CD4-positive, alpha-beta T cell (primary cell): ENCODE measurements at regions of chr17 and their contacts with region 1.

Region 1: GRCh38 chr17:39235555-39236449 is 10.1 kb upstream of the STAC2 start:
- DNase-seq: peak in 9 of 14 experiments; percentile 23 to 80 (median 47)
- ATAC-seq: peak; percentile 45
- H3K4me3 ChIP-seq: no peak overlapping the region
- H3K4me3 Mint-ChIP-seq: no peak overlapping the region
- H3K27ac ChIP-seq: no peak overlapping the region
- H3K27ac Mint-ChIP-seq: peak overlapping the region; percentile 31
- H3K4me1 ChIP-seq: peaks cover 56% of the 10 kb centered on the region
- H3K4me1 Mint-ChIP-seq: peaks cover 44% of the 10 kb centered on the region
- H3K27me3 ChIP-seq: peaks cover 0 to 4% of the 10 kb centered on the region in 2 experiments
- H3K27me3 Mint-ChIP-seq: peaks cover 14% of the 10 kb centered on the region
- CTCF ChIP-seq: peak; percentile 63

Region 2: GRCh38 chr17:39077866-39078265 is 157.9 kb before region 1 on chr17:
- CTCF ChIA-PET with region 1: no interaction called
- POLR2A ChIA-PET with region 1: no interaction called
- intact Hi-C with region 1: loop called in 1 of 2 experiments (anchors 10 kb)
- DNase-seq: no peak
- ATAC-seq: no peak
- H3K4me3 ChIP-seq: no peak overlapping the region
- H3K4me3 Mint-ChIP-seq: no peak overlapping the region
- H3K27ac ChIP-seq: no peak overlapping the region
- H3K27ac Mint-ChIP-seq: no peak overlapping the region
- H3K4me1 ChIP-seq: no peaks in the 10 kb centered on the region
- H3K4me1 Mint-ChIP-seq: no peaks in the 10 kb centered on the region
- H3K27me3 ChIP-seq: no peaks in the 10 kb centered on the region
- H3K27me3 Mint-ChIP-seq: no peaks in the 10 kb centered on the region
- CTCF ChIP-seq: no peak

Region 3: GRCh38 chr17:39164675-39165143 is 71.1 kb before region 1 on chr17:
- CTCF ChIA-PET with region 1: interaction called, 12 read pairs
- POLR2A ChIA-PET with region 1: no interaction called
- intact Hi-C with region 1: no loop called
- DNase-seq: peak; percentile 56 to 85 (median 63)
- ATAC-seq: peak; percentile 86
- H3K4me3 ChIP-seq: peak overlapping the region; percentile 60
- H3K4me3 Mint-ChIP-seq: peak overlapping the region; percentile 90
- H3K27ac ChIP-seq: no peak overlapping the region
- H3K27ac Mint-ChIP-seq: no peak overlapping the region
- H3K4me1 ChIP-seq: peaks cover 32% of the 10 kb centered on the region
- H3K4me1 Mint-ChIP-seq: peaks cover 27% of the 10 kb centered on the region
- H3K27me3 ChIP-seq: peaks cover 17 to 22% of the 10 kb centered on the region in 2 experiments
- H3K27me3 Mint-ChIP-seq: peaks cover 34% of the 10 kb centered on the region
- CTCF ChIP-seq: peak; percentile 94

Region 4: GRCh38 chr17:39174907-39175694 is 60.7 kb before region 1 on chr17:
- CTCF ChIA-PET with region 1: interaction called, 10 read pairs
- POLR2A ChIA-PET with region 1: interaction called, 5 read pairs
- intact Hi-C with region 1: no loop called
- DNase-seq: peak; percentile 67 to 91 (median 74)
- ATAC-seq: peak; percentile 95
- H3K4me3 ChIP-seq: no peak overlapping the region
- H3K4me3 Mint-ChIP-seq: no peak overlapping the region
- H3K27ac ChIP-seq: no peak overlapping the region
- H3K27ac Mint-ChIP-seq: no peak overlapping the region
- H3K4me1 ChIP-seq: peaks cover 22% of the 10 kb centered on the region
- H3K4me1 Mint-ChIP-seq: peaks cover 22% of the 10 kb centered on the region
- H3K27me3 ChIP-seq: no peaks in the 10 kb centered on the region
- H3K27me3 Mint-ChIP-seq: no peaks in the 10 kb centered on the region
- CTCF ChIP-seq: peak; percentile 82

Region 5: DNA sequence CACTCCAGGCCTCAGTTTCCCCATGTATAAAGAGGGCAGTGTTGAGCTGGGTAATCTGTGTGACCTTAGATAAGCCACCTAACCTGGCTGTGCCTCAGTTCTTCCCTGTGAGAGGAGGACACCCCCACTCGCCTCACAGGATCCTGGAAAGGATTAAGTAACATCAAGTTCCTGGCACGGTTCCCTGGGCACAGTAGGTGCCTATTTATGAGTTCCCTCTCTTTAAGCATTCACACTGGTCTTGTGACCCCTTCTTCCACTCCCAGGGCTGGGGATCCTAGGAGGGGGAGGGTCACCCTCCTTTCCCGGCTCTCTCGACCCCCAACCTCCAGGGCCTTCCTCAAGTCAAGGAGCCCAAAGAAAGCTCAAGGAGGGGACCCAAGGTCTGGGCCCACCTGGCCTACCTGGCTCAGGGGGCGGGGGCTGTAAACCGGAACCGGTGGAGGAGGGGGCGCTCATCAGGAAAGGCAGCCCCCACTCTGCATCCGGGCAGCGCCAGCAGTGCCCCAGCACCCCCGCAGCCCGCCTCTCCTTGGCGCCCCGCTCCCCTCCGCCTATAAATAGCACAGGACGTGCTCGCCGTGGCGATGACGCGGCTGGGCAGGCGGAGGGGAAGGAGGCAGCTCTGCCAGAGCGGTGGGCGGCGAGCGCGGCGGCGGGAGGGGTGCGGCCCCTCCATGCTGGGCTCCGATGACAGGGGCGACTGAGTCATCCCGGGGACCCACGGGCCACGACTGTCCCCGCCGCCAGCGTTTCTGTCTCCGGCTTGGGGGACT is 26.3 kb before region 1 on chr17:
- CTCF ChIA-PET with region 1: interaction called, 122 read pairs
- POLR2A ChIA-PET with region 1: interaction called, 36 read pairs
- intact Hi-C with region 1: loop called in 1 of 2 experiments (anchors 1 kb)
- DNase-seq: peak; percentile 32 to 89 (median 62)
- ATAC-seq: peak; percentile 74
- H3K4me3 ChIP-seq: peak overlapping the region; percentile 55
- H3K4me3 Mint-ChIP-seq: no peak overlapping the region
- H3K27ac ChIP-seq: peak overlapping the region in 1 of 2 donors; percentile 7
- H3K27ac Mint-ChIP-seq: peak overlapping the region; percentile 62
- H3K4me1 ChIP-seq: peaks cover 36% of the 10 kb centered on the region
- H3K4me1 Mint-ChIP-seq: peaks cover 29% of the 10 kb centered on the region
- H3K27me3 ChIP-seq: no peaks in the 10 kb centered on the region
- H3K27me3 Mint-ChIP-seq: no peaks in the 10 kb centered on the region
- CTCF ChIP-seq: no peak